GM12878 (cell line): ENCODE measurements at regions of chr6 and their contacts with region 1.

Region 1: GRCh38 chr6:53437557-53438202 is 88.9 kb upstream of the ELOVL5 start:
- DNase-seq: peak; percentile 27
- ATAC-seq: peak; percentile 69
- H3K4me3 ChIP-seq: no peak overlapping the region
- H3K27ac ChIP-seq: no peak overlapping the region
- H3K4me1 ChIP-seq: peaks cover 4% of the 10 kb centered on the region; the same call in 1 of the 2 replicates
- H3K27me3 ChIP-seq: peaks cover 0 to 5% of the 10 kb centered on the region in 2 experiments; a peak in 1 of 4 replicates
- CTCF ChIP-seq: peak; percentile 64 to 77 (median 67)
- EP300 ChIP-seq: no peak
- POLR2A ChIP-seq: no peak
- RAD21 ChIP-seq: peak; percentile 90

Region 2: DNA sequence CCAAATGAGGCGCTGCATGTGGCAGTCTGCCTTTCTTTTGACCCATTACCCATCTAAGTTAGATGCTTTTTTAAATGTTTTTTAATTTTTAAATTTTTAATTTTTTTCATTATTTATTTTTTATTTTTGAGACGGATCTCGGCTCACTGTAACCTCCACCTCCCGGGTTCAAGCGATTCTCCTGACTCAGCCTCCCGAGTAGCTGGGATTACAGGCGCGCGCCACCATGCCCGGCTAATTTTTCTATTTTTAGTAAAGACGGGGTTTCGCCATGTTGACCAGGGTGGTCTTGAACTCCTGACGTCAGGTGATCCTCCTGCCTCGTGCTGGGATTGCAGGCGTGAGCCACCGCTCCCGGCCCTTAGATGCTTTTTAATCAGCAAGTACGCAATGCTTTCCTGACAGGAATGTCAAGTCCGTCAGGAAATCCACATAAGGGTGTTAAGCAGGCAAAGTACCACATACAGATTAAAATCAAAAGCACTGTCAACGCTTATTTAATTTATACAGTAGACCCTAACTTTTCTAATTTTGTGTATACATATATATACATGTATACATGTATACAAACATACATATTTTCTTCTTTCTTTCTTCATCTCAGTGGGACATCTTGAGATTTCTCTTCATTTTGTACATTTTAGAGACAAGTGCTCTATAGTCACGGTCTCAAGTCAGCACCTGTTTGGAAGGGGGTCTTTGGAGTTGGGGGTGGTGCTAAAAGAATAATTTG is 441.6 kb before region 1 on chr6:
- CTCF ChIA-PET with region 1: no interaction called
- POLR2A ChIA-PET with region 1: no interaction called
- RAD21 ChIA-PET with region 1: no interaction called
- SMC1A ChIA-PET with region 1: no interaction called
- in situ Hi-C with region 1: no loop called
- intact Hi-C with region 1: loop called (anchors 5 kb)
- DNase-seq: peak; percentile 51
- ATAC-seq: peak; percentile 11
- H3K4me3 ChIP-seq: peak overlapping the region; percentile 65
- H3K27ac ChIP-seq: no peak overlapping the region
- H3K4me1 ChIP-seq: no peaks in the 10 kb centered on the region
- H3K27me3 ChIP-seq: no peaks in the 10 kb centered on the region
- CTCF ChIP-seq: no peak
- EP300 ChIP-seq: no peak
- POLR2A ChIP-seq: no peak
- RAD21 ChIP-seq: no peak

Region 3: GRCh38 chr6:53189554-53189953 is 248.1 kb before region 1 on chr6:
- CTCF ChIA-PET with region 1: interaction called, 6 read pairs
- POLR2A ChIA-PET with region 1: no interaction called
- RAD21 ChIA-PET with region 1: interaction called, 7 read pairs
- SMC1A ChIA-PET with region 1: interaction called, 17 read pairs
- in situ Hi-C with region 1: no loop called
- intact Hi-C with region 1: no loop called
- DNase-seq: no peak
- ATAC-seq: peak; percentile 20; the same call in 2 of the 3 replicates
- H3K4me3 ChIP-seq: no peak overlapping the region
- H3K27ac ChIP-seq: no peak overlapping the region
- H3K4me1 ChIP-seq: no peaks in the 10 kb centered on the region; the same call in 1 of the 2 replicates
- H3K27me3 ChIP-seq: no peaks in the 10 kb centered on the region
- CTCF ChIP-seq: no peak
- EP300 ChIP-seq: no peak
- POLR2A ChIP-seq: no peak
- RAD21 ChIP-seq: no peak

Region 4: GRCh38 chr6:53309059-53309900 is 128.4 kb before region 1 on chr6:
- CTCF ChIA-PET with region 1: interaction called, 13 read pairs
- POLR2A ChIA-PET with region 1: interaction called, 3 read pairs
- RAD21 ChIA-PET with region 1: interaction called, 17 read pairs
- SMC1A ChIA-PET with region 1: interaction called, 16 read pairs
- in situ Hi-C with region 1: no loop called
- intact Hi-C with region 1: loop called (anchors 5 kb)
- DNase-seq: peak; percentile 42
- ATAC-seq: peak; percentile 58
- H3K4me3 ChIP-seq: no peak overlapping the region
- H3K27ac ChIP-seq: peak overlapping the region; percentile 10
- H3K4me1 ChIP-seq: peaks cover 39% of the 10 kb centered on the region
- H3K27me3 ChIP-seq: no peaks in the 10 kb centered on the region
- CTCF ChIP-seq: no peak
- EP300 ChIP-seq: peak in 1 of 2 experiments; percentile 19; a peak in 1 of 4 replicates
- POLR2A ChIP-seq: peak; percentile 28; the same call in 1 of the 2 replicates
- RAD21 ChIP-seq: no peak

Region 5: DNA sequence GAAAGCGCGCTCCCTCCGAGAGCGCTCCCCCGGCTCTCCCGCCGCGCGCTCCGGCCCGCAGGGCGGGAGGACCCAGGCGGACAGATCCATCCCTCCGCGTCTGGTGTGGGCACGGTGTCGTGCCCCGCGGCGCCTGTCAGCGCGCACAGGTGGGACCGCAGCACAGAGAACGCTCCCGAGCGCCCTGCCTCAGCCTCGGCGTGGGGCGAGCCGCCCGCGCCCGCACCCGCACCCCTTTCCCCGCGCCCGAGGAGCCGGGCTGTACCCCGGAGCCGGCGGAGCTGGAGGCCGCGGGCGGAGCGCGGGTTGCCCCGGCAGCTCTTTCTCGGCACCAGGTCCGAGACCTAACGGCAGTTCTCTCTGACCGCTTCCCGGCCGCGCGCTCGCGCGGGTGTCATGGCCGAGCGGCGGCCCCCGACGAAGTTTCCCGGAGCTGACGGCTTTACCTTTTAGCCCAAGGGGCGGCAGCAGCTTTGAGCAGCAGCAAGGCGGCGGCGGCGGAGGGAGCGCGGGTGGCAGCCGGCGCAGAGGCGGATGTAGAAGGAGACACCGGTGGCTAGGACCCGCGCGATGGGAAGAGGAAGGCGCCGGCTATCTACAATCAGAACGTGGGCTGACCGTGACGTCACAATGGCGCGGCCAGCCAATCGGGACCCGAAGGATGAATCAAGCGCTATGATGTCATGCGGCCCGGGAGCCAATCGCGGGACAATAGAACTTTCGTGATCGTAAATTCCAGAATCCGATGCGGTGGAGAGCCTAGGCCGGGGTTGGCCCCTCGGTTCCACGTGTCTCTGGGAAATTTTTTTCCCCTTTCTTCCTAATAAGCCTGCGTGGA is 89.1 kb before region 1 on chr6 and contains the start of gene ELOVL5:
- CTCF ChIA-PET with region 1: interaction called, 28 read pairs
- POLR2A ChIA-PET with region 1: interaction called, 3 read pairs
- RAD21 ChIA-PET with region 1: interaction called, 18 read pairs
- SMC1A ChIA-PET with region 1: interaction called, 15 read pairs
- in situ Hi-C with region 1: no loop called
- intact Hi-C with region 1: loop called (anchors 2 kb)
- DNase-seq: peak; percentile 73
- ATAC-seq: peak; percentile 80
- H3K4me3 ChIP-seq: peak within 1 kb of the TSS; percentile 92
- H3K27ac ChIP-seq: peak within 1 kb of the TSS; percentile 85
- H3K4me1 ChIP-seq: peaks cover 11% of the 10 kb centered on the region
- H3K27me3 ChIP-seq: no peaks in the 10 kb centered on the region; a peak in 1 of 4 replicates
- CTCF ChIP-seq: no peak
- EP300 ChIP-seq: no peak
- POLR2A ChIP-seq: peak; percentile 81
- RAD21 ChIP-seq: no peak
- polyA plus RNA-seq, gene ELOVL5: 187 to 195 TPM

Region 6: DNA sequence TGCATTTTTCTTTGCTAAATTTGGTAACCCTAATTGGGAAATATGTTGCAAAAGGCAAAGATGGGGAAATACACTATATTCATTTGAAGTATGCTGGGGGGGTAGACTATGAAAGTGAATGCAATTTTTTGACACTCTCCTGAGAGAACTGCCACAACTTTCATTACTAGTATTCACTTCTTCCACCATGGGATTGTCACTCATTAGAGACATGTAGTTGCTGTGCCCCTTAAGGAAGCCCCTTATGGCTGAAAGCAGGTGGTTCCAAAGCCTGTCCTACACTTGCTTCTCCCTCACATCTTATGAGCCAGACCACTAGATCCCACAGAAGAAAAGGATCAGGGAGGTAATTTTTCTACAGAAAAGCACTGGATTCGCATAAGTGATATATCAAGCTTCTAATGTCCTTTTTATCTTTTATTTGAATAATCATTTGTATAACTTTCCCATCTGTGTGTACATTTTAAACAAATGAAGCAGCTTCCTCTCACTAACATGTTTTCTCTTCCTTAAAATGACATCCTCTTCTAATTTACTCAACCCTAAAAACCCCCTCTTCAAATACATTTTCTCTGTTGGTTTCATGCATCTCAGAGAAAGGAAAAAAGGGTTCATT is 23.5 kb after region 1 on chr6:
- CTCF ChIA-PET with region 1: interaction called, 33 read pairs
- POLR2A ChIA-PET with region 1: interaction called, 17 read pairs
- RAD21 ChIA-PET with region 1: interaction called, 53 read pairs
- SMC1A ChIA-PET with region 1: interaction called, 229 read pairs
- in situ Hi-C with region 1: no loop called
- intact Hi-C with region 1: loop called (anchors 1 kb)
- DNase-seq: peak; percentile 65
- ATAC-seq: peak; percentile 81
- H3K4me3 ChIP-seq: 0 out of 2 replicates have a peak overlapping the region, but pooled peaks have one; percentile 30
- H3K27ac ChIP-seq: peak overlapping the region; percentile 41; the same call in 1 of the 2 replicates
- H3K4me1 ChIP-seq: no peaks in the 10 kb centered on the region
- H3K27me3 ChIP-seq: no peaks in the 10 kb centered on the region
- CTCF ChIP-seq: no peak
- EP300 ChIP-seq: peak; percentile 40 to 60; a peak in 2 of 4 replicates
- POLR2A ChIP-seq: no peak
- RAD21 ChIP-seq: no peak